ENCODE measurements at regions of chr6 and their contacts with region 1.

Region 1: DNA sequence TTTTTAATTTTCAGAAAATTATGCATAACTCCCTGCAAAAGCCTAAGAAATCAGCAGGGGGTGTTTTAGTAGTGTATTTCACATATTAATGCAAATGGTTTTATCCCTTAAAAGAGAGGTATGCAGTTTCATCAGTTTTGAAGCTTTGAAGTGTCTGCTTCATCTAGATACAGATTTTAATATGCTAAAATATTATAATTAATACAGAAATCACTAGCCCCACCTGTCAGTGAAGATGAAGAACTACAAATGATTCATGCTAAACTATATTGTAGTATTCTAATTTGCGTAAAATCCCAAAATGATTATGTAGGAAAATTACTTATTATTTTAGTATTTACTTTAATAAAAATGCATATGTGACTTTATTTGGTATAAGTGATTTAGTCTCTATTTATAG is 2.9 kb upstream of the TFB1M start:
- DNase-seq: no peak
- ATAC-seq: no peak
- H3K4me3 ChIP-seq: no peak overlapping the region
- H3K27ac ChIP-seq: no peak overlapping the region
- H3K4me1 ChIP-seq: peaks cover 10% of the 10 kb centered on the region; the same call in 1 of the 3 replicates
- CTCF ChIP-seq: no peak
- EP300 ChIP-seq: no peak
- POLR2A ChIP-seq: no peak
- RAD21 ChIP-seq: no peak

Region 2: DNA sequence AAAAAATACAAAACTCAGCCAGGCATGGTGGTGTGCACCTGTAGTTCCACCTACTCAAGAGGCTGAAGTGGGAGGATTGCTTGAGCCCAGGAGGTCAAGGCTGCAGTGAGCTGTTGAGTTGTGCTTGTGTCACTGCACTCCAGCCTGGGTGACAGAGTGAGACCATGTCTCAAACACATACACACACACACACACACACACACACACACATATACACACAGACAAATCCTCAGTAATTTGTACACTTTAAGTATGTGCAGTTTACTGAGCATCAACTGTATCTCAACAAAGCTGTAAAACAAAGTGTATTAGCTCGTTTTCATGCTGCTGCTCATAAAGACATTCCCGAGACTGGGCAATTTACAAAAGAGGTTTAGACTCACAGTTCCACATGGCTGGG is 10.2 kb before region 1 on chr6:
- CTCF ChIA-PET with region 1: no interaction called
- POLR2A ChIA-PET with region 1: no interaction called
- DNase-seq: no peak
- ATAC-seq: no peak
- H3K4me3 ChIP-seq: no peak overlapping the region
- H3K27ac ChIP-seq: no peak overlapping the region
- H3K4me1 ChIP-seq: peaks cover 18% of the 10 kb centered on the region; the same call in 2 of the 3 replicates
- CTCF ChIP-seq: no peak
- EP300 ChIP-seq: no peak
- POLR2A ChIP-seq: no peak
- RAD21 ChIP-seq: no peak

Region 3: DNA sequence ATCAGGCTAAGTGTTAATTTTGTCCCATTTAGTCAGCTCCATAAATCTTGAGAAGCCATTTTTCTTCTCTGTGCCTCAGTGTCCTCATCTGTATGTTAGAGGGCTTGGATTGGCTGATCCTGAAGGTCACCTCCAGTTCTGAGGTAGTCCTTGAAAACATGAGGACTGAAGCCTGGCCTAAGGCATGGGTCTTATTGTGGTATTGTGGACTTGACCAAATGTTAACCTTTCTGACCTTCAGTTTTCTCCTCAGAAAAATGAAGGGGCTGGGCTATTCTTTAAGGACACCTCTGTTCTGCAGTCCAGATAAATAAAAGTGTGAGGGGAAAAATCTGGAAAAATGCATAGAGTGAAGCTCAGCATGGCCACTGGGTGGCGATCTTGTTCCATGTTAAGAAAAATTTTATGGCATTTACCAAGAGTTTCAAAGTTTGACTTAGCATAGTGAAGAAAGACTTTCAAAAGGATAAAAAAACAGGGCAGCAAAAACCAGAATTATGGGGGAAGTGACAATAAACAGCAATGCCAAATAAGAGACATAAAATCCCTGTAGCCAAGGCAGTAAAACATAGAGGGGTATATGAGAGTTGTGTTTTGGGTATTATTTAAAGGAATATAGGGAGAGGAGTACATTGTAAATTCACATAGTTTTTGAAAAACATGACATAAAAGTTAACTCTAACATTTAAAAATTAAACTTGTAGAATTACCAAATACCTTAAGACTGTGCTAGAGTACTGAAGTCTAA is 10.3 kb after region 1 on chr6:
- CTCF ChIA-PET with region 1: interaction called, 13 read pairs
- POLR2A ChIA-PET with region 1: interaction called, 3 read pairs
- DNase-seq: peak; percentile 4 to 56
- ATAC-seq: peak; percentile 56 to 78; a peak in 5 of 6 replicates
- H3K4me3 ChIP-seq: no peak overlapping the region
- H3K27ac ChIP-seq: peak overlapping the region; percentile 4 to 70; a peak in 4 of 6 replicates
- H3K4me1 ChIP-seq: peaks cover 14% of the 10 kb centered on the region; the same call in 2 of the 3 replicates
- CTCF ChIP-seq: peak; percentile 80
- EP300 ChIP-seq: no peak
- POLR2A ChIP-seq: no peak
- RAD21 ChIP-seq: peak; percentile 82 to 93